ENCODE measurements at regions of chr13 and their contacts with region 1.

Region 1: DNA sequence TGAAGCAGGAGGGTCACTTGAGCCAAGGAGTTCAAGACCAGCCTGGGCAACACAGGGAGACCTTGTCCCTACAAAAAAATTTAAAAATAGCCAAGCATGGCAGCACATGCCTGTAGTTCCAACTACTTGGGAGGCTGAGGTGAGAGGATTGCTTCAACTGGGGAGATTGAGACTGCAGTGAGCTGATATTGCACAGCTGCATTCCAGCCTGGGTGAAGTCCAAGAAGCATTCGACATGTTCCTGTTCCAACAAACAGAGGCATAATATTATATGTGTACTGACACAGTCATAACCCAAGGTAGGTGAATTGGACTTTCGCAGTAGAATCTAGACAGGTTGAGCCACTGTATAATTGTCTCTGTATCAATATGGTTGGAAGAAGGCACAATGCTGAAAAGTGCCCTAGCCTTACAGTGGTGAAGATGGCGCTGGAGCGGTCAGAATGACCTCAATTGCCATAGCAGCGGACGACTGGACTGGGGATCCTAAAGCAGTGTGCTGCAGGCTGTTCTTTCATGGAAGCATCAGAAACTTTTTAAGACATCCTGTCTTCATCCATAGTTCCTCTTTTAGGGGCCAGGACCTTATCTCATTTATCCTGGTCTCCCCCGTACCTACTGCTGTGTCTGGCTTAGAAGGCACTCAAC is 112.0 kb upstream of the CLDN10 start:
- DNase-seq: no peak
- H3K4me3 ChIP-seq: no peak overlapping the region
- H3K27ac ChIP-seq: no peak overlapping the region
- H3K4me1 ChIP-seq: no peaks in the 10 kb centered on the region
- H3K27me3 ChIP-seq: no peaks in the 10 kb centered on the region
- CTCF ChIP-seq: no peak
- POLR2A ChIP-seq: no peak

Region 2: GRCh38 chr13:94515374-94515773 is 925.2 kb before region 1 on chr13:
- intact Hi-C with region 1: loop called (anchors 5 kb)
- DNase-seq: no peak
- H3K4me3 ChIP-seq: no peak overlapping the region
- H3K27ac ChIP-seq: no peak overlapping the region
- H3K4me1 ChIP-seq: no peaks in the 10 kb centered on the region
- H3K27me3 ChIP-seq: no peaks in the 10 kb centered on the region
- CTCF ChIP-seq: no peak
- POLR2A ChIP-seq: no peak

Measured in vagina (tissue), 2 donors.